ENCODE measurements at regions of chr2 and their contacts with region 1.

Region 1: DNA sequence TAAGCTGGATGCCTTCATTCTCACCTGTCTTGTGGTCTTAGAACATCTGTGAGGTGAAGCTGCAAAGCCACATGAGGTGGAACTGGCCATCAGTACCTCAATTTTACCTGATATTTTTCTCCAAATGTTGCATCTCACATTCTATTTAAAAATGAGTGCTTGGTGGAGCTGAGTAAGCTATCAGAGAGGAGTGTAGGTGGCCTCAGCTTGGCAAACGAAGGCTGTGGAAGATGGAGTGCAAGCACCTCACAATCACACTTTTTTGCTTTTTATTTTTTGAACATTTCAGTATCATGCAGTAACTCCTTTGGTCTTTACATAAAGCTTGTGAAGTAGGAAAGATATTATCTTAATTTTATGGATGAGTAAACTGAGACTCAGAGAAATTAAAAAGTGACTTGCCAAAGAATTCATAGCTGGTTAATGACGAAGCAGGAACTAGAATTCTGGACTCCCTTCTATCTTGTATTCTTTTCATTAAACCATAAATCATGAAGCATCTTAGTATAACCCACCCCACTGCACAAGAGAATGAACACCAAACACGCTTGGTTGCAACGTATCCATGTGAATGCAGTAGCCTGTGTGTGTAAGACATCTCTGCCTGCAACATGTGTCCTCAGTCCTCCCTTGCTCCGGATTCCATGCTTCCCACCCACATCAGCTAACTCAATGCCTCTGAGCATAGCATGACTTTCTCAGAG is 27.2 kb downstream of the C2orf49 start:
- DNase-seq: no peak
- H3K4me3 Mint-ChIP-seq: no peak overlapping the region
- H3K27ac Mint-ChIP-seq: no peak overlapping the region
- H3K4me1 Mint-ChIP-seq: no peaks in the 10 kb centered on the region
- H3K27me3 Mint-ChIP-seq: no peaks in the 10 kb centered on the region
- CTCF ChIP-seq: no peak

Region 2: DNA sequence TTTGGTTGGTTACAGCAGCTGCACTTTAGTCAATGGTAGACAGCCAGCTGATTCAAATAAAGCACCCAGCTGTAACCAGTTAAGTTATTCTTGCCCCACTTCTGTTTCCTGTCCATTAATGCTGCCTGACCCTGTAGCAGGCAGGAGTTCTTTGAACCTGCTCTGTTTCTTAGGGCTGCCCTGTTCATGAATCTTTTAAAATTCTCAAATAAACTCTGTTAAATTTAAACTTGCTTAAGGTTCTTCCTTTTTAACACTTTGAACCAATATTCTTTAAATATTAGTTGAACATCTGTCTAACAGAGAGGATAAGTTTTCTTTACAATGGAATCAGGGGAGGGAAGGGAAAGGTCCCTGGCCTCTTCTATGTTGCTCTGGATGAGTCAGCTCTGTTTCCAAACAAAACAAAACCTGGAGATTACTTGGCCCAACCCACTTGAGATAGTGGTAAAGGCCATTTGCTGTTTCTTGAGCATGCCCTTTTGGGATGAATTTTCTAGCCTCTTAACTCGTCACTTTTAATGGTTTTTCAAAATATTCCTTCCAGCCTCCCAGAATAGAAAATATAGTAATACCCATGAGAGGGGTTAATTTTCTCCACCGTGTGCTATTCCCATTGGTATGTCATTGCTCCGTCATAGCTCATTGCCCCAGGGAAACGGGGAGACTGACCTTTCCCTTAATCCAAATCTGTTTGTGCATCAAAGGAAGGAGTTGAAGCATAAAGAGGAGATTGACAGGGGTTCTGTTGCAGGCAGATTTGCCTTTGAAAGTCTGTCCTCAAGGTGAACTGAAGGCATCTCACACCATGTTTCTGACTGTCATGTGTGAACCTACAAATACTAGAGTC is 146.4 kb after region 1 on chr2:
- CTCF ChIA-PET with region 1: interaction called, 92 read pairs
- POLR2A ChIA-PET with region 1: interaction called, 10 read pairs
- intact Hi-C with region 1: no loop called
- DNase-seq: peak; percentile 72
- H3K4me3 Mint-ChIP-seq: no peak overlapping the region
- H3K27ac Mint-ChIP-seq: no peak overlapping the region
- H3K4me1 Mint-ChIP-seq: peaks cover 15% of the 10 kb centered on the region
- H3K27me3 Mint-ChIP-seq: no peaks in the 10 kb centered on the region
- CTCF ChIP-seq: no peak